Activated naive CD4-positive, alpha-beta T cell treated with anti-CD3 and anti-CD28 coated beads for 36 hours (primary cell): ENCODE measurements at regions of chr4 and their contacts with region 1.

Region 1: GRCh38 chr4:141133146-141133998 is at the start of gene RNF150:
- DNase-seq: peak; percentile 72
- H3K4me3 Mint-ChIP-seq: peak within 1 kb of the TSS; percentile 86
- H3K27ac Mint-ChIP-seq: no peak within 1 kb of the TSS
- H3K4me1 Mint-ChIP-seq: peaks cover 8% of the 10 kb centered on the region
- H3K27me3 Mint-ChIP-seq: peaks cover 70% of the 10 kb centered on the region
- total RNA-seq, gene RNF150: not detected

Region 2: GRCh38 chr4:140861359-140862176 is 271.8 kb before region 1 on chr4:
- CTCF ChIA-PET with region 1: interaction called, 5 read pairs
- intact Hi-C with region 1: loop called (anchors 1 kb)
- DNase-seq: peak; percentile 79
- H3K4me3 Mint-ChIP-seq: no peak overlapping the region
- H3K27ac Mint-ChIP-seq: no peak overlapping the region
- H3K4me1 Mint-ChIP-seq: no peaks in the 10 kb centered on the region
- H3K27me3 Mint-ChIP-seq: no peaks in the 10 kb centered on the region

Region 3: GRCh38 chr4:140870427-140870826 is 262.9 kb before region 1 on chr4:
- CTCF ChIA-PET with region 1: interaction called, 12 read pairs
- intact Hi-C with region 1: no loop called
- DNase-seq: no peak
- H3K4me3 Mint-ChIP-seq: no peak overlapping the region
- H3K27ac Mint-ChIP-seq: no peak overlapping the region
- H3K4me1 Mint-ChIP-seq: no peaks in the 10 kb centered on the region
- H3K27me3 Mint-ChIP-seq: peaks cover 6% of the 10 kb centered on the region

Region 4: GRCh38 chr4:141065872-141066271 is 67.5 kb before region 1 on chr4:
- CTCF ChIA-PET with region 1: no interaction called
- intact Hi-C with region 1: no loop called
- DNase-seq: no peak
- H3K4me3 Mint-ChIP-seq: no peak overlapping the region
- H3K27ac Mint-ChIP-seq: no peak overlapping the region
- H3K4me1 Mint-ChIP-seq: no peaks in the 10 kb centered on the region
- H3K27me3 Mint-ChIP-seq: no peaks in the 10 kb centered on the region

Region 5: DNA sequence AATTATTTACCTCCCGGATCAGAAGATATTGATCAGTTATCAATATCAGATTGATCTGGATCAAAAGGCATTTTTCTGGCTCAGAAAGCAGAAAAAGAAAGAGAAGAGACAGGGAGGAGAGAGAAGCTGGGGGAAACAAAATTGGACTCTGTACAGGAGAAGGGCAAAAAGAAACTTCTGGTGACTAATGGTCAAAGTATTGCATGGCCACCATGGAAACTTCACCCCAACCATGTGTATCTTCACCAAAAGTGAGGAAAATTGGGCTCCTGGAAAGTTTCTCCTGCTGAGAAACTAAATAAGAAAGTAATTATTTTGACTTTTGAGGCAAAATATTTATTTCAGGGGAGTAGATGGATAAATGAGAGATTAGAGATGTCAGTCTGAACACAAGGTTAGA is 34.0 kb before region 1 on chr4:
- CTCF ChIA-PET with region 1: no interaction called
- intact Hi-C with region 1: no loop called
- DNase-seq: no peak
- H3K4me3 Mint-ChIP-seq: no peak overlapping the region
- H3K27ac Mint-ChIP-seq: no peak overlapping the region
- H3K4me1 Mint-ChIP-seq: no peaks in the 10 kb centered on the region
- H3K27me3 Mint-ChIP-seq: no peaks in the 10 kb centered on the region

Region 6: DNA sequence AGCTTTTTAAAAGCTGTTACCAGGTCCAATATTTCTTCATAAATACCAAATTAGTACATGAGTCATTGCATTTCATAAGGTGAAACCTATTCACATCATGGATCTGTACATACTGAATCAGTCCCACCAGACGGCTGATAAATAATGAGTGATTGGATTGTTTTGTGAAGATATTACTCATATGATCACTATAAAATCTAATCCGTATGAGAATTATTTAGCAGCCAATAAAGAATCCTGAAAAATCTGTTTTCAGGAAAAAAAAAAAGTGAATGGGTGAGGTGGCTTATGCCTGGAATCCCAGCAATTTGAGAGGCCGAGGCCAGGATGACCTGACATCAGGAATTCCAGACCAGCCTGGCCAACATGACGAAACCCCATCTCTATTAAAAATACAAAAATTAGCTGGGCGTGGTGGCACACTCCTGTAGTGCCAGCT is 1274.7 kb after region 1 on chr4:
- CTCF ChIA-PET with region 1: no interaction called
- intact Hi-C with region 1: no loop called
- DNase-seq: no peak
- H3K4me3 Mint-ChIP-seq: no peak overlapping the region
- H3K27ac Mint-ChIP-seq: peak overlapping the region; percentile 100
- H3K4me1 Mint-ChIP-seq: peaks cover 64% of the 10 kb centered on the region
- H3K27me3 Mint-ChIP-seq: no peaks in the 10 kb centered on the region